GM12878 (cell line): ENCODE measurements at regions of chr3 and their contacts with region 1.

Region 1: DNA sequence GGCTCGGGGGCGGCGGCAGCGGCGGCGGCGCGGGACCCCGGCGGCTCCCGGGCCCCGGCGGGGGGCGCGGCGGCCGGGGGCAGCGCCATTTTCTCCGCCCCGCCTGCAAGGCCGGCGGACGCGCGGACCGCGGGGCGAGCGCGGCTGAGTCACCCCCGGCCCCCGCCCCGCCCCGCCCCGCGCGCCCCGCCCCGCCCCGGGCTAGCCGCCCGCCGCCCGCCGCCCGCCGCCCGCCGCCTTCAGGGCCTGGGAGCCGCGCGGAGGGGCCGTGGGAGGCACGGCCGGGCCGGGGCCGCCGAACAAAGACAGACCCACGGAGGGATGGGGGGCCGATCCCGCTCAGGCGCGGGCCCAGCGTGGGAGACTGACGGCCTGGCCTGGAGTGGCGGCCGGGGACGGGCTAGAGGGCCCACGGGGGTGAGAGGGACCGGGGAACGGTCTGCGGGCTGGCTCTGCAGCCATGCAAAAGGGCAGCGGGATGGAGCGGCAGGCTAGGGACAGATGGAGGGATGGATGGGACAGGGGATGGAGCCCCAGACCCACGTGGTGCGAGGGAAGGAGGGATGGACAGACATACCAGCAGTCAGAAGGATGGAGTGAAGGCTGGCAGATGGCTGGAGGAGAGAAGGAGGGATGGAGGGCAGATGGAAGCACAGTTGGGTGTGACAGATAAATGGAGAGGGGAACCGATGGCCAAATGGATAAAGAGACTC is at the start of gene EIF4E3:
- DNase-seq: no peak
- ATAC-seq: no peak
- H3K4me3 ChIP-seq: peak within 1 kb of the TSS; percentile 60; the same call in 1 of the 2 replicates
- H3K27ac ChIP-seq: no peak within 1 kb of the TSS
- H3K4me1 ChIP-seq: peaks cover 10% of the 10 kb centered on the region
- H3K27me3 ChIP-seq: peaks cover 9 to 12% of the 10 kb centered on the region in 2 experiments
- CTCF ChIP-seq: no peak
- EP300 ChIP-seq: no peak
- POLR2A ChIP-seq: no peak
- RAD21 ChIP-seq: no peak
- polyA plus RNA-seq, gene EIF4E3: 0.05 to 0.18 TPM

Region 2: GRCh38 chr3:71859123-71859519 is 133.7 kb after region 1 on chr3:
- CTCF ChIA-PET with region 1: interaction called, 7 read pairs
- POLR2A ChIA-PET with region 1: no interaction called
- RAD21 ChIA-PET with region 1: no interaction called
- SMC1A ChIA-PET with region 1: no interaction called
- in situ Hi-C with region 1: no loop called
- intact Hi-C with region 1: loop called (anchors 1 kb)
- DNase-seq: no peak
- ATAC-seq: peak; percentile 71
- H3K4me3 ChIP-seq: no peak overlapping the region
- H3K27ac ChIP-seq: no peak overlapping the region
- H3K4me1 ChIP-seq: no peaks in the 10 kb centered on the region
- H3K27me3 ChIP-seq: peaks cover 2 to 3% of the 10 kb centered on the region in 2 experiments; a peak in 2 of 4 replicates
- CTCF ChIP-seq: peak; percentile 34 to 42 (median 38); a peak in 5 of 6 replicates
- EP300 ChIP-seq: no peak
- POLR2A ChIP-seq: no peak
- RAD21 ChIP-seq: peak; percentile 52

Region 3: GRCh38 chr3:72009851-72010443 is 284.5 kb after region 1 on chr3:
- CTCF ChIA-PET with region 1: no interaction called
- POLR2A ChIA-PET with region 1: no interaction called
- RAD21 ChIA-PET with region 1: no interaction called
- SMC1A ChIA-PET with region 1: no interaction called
- in situ Hi-C with region 1: no loop called
- intact Hi-C with region 1: no loop called
- DNase-seq: no peak
- ATAC-seq: peak; percentile 68
- H3K4me3 ChIP-seq: no peak overlapping the region
- H3K27ac ChIP-seq: no peak overlapping the region
- H3K4me1 ChIP-seq: peaks cover 22% of the 10 kb centered on the region
- H3K27me3 ChIP-seq: no peaks in the 10 kb centered on the region
- CTCF ChIP-seq: 0 out of 6 replicates have a peak, but pooled peaks of 2 of the 3 experiments have one; percentile 2 to 7
- EP300 ChIP-seq: no peak
- POLR2A ChIP-seq: no peak
- RAD21 ChIP-seq: peak; percentile 21; the same call in 1 of the 2 replicates